ENCODE measurements at regions of chr9 and their contacts with region 1.

Region 1: DNA sequence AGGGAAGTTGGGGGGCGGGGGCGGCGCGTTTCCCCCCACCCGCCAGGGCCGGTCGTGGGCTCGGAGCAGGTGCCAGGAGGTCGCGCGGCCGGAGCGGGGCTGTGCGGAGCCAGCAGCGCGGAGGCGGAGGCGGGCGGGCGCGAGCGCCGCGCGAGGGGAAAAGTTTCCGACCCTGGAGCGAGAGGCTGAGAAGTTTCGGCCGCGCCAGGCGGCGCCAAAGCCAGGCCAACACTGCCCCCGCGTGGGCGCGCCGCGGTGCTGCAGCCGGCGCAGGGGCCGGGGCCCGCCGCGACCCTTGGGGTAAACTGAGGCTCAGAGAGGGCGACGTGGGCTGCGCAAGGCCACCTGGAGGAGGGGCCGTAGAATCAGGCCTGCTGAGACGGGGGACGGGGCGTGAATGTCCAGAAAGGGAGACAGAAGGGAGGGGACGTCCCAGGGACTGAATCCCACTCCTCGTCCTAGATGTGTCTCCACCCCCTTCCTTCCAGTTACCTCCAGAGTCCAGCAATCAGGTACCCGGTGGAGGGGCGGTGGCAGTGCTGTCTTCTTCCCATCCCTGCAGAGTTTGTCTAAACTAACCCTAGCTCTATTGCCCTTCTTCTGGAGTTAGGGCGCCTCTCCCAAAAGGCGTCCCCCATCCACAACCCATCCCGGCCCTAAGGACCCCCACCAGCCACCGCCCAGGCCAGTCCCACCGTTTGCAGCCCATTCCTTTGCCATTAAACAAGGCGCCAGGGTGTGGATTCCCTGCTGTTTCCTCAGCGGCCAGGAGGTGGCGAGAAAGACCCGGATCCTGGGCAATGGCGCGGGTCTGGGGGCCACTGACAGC is 10.2 kb downstream of the C9orf50 start:
- DNase-seq: peak; percentile 89
- ATAC-seq: peak; percentile 53

Region 2: GRCh38 chr9:129139993-129140396 is 470.7 kb before region 1 on chr9:
- intact Hi-C with region 1: loop called (anchors 1 kb)
- DNase-seq: peak; percentile 93
- ATAC-seq: peak; percentile 84

Region 3: DNA sequence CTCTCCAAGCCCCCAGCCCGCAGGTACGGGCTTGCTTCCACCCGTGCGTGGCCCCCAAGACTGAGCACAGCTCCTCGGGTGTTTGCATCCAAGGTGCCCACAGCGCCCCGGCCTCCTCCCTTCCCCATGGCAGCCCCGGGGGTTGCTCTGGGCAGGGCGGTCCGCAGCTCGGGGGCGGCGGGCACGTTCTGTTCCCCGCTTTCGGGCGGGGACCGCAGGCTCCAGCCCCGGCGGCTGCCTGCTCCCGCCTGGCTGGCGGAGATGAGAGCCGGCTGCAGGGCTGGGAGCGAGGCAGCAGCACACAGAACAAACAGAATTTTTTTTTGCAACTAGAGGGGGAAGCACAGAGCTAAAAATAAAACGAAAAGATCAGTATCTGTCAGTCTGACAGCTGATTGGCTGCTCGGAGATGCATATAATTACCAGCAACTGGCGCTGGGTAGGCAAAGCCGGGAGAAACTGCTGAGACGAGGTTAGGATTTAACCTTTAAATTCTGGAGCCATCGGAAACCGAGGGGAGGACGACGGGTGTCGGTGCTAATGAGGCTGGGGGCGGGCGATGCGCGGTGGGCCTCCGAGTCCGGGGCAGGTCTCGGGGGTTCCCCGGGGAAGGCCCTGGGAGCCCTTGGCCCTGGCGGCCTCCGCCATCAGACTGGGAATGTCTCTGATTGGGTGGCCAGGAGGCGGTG is 290.0 kb before region 1 on chr9:
- intact Hi-C with region 1: loop called (anchors 5 kb)
- DNase-seq: peak; percentile 86
- ATAC-seq: peak; percentile 78

Region 4: GRCh38 chr9:129460323-129461261 is 150.1 kb before region 1 on chr9:
- intact Hi-C with region 1: loop called (anchors 2 kb)
- DNase-seq: peak; percentile 99
- ATAC-seq: peak; percentile 93

Region 5: DNA sequence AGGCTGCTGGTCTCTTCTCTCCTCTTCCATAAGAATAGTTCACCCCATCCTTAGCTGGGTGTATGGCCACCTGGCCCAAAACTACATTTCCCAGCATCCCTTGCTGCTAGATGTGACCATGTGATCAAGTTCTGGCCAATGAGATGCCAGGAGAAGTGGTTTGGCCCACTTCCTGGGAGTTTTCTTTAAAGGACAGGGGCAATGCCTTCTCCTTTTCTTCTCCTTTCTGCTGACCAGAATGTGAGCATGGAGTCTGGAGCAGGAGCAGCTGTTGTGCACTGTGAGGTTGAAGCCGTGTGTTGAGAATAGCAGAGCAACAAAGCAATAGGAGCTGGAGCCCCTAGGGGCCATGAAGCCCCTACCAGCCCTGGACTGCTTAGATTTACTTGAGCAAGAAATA is 26.6 kb before region 1 on chr9:
- intact Hi-C with region 1: no loop called
- DNase-seq: peak; percentile 67
- ATAC-seq: peak; percentile 68

Region 6: DNA sequence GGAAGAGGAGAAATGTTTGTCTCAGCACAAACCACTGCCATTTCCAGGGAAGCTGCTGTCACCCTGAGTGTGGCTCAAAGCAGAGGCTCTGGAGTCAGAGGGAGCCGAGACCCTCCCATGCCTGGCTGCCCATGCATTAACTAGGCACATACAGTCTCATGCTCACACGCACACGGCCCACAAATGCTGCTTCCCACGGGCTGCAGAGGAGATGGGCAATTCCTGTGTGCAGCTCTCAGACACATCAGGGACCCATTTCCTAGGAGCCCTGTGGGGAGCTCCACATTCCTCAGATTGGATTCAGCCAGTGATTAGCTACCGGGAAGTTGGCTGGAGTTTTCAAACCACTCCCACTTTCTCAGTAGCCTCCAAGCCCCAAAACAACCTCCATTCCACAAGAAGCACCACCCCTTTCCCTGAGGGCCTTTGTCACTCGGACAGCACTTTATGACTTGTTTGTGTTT is 151.2 kb after region 1 on chr9:
- intact Hi-C with region 1: no loop called
- DNase-seq: no peak
- ATAC-seq: peak; percentile 24